Prostate gland (tissue), 2 donors: ENCODE measurements at regions of chr2 and their contacts with region 1.

Region 1: DNA sequence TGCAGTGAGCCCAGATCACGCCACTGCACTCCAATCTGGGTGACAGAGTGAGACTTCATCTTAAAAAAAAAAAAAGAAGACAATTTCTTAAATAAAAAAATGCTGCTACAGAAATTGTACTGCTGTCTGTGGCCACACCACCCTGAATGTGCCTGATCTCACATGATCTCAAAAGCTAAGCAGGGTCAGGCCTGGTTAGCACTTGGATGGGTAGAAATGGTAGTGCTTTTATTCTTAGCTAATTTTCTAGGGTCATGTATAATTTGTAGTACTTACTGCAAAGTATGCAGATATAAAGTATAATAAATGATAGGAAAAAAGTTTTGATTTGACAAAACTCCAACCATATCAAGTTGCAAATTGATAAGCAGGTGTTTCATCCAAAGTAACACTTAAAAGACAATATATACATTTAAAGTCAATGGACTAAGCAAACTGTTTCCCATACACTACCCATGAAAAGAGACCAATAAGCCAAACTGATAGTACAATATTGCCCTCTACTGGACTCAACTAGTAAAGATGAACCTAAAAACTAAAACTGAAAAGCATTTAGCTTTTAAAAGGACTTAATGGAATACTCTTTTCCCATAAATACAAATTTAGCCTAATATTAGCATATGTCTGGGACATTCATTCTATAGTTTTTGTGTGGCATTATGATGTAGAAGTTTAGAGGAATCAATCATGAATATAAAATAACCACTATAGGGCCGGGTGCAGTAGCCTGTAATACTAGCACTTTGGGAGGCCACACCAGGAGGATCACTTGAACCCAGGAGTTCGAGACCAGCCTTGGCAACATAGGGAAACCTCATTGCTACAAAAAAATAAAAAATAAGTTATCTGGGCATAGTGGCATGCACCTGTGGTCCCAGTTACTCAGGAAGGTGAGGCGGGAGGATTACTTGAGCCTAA is 18.6 kb upstream of the PEX13 start:
- DNase-seq: no peak
- H3K4me3 ChIP-seq: no peak overlapping the region
- H3K27ac ChIP-seq: no peak overlapping the region
- H3K4me1 ChIP-seq: no peaks in the 10 kb centered on the region
- H3K27me3 ChIP-seq: no peaks in the 10 kb centered on the region
- CTCF ChIP-seq: peak in 3 of 4 experiments; percentile 57 to 79 (median 72)
- POLR2A ChIP-seq: no peak

Region 2: GRCh38 chr2:60707750-60708371 is 291.0 kb before region 1 on chr2:
- intact Hi-C with region 1: loop called (anchors 5 kb)
- DNase-seq: no peak
- H3K4me3 ChIP-seq: no peak overlapping the region
- H3K27ac ChIP-seq: no peak overlapping the region
- H3K4me1 ChIP-seq: no peaks in the 10 kb centered on the region
- H3K27me3 ChIP-seq: no peaks in the 10 kb centered on the region
- CTCF ChIP-seq: peak; percentile 52 to 84 (median 71)
- POLR2A ChIP-seq: no peak

Region 3: GRCh38 chr2:60796573-60797509 is 202.0 kb before region 1 on chr2:
- intact Hi-C with region 1: loop called (anchors 5 kb)
- DNase-seq: no peak
- H3K4me3 ChIP-seq: no peak overlapping the region
- H3K27ac ChIP-seq: no peak overlapping the region
- H3K4me1 ChIP-seq: no peaks in the 10 kb centered on the region
- H3K27me3 ChIP-seq: no peaks in the 10 kb centered on the region
- CTCF ChIP-seq: no peak
- POLR2A ChIP-seq: no peak